CD4-positive, alpha-beta memory T cell (primary cell): ENCODE measurements at regions of chr17 and their contacts with region 1.

Region 1: GRCh38 chr17:46212634-46213435 is 19.6 kb upstream of the KANSL1 start:
- DNase-seq: peak; percentile 73 to 80 (median 76)
- H3K4me3 ChIP-seq: no peak overlapping the region
- H3K4me3 Mint-ChIP-seq: peak overlapping the region in 2 of 8 donors; percentile 1 to 15
- H3K27ac ChIP-seq: no peak overlapping the region
- H3K27ac Mint-ChIP-seq: peak overlapping the region; percentile 9 to 92 (median 54)
- H3K4me1 ChIP-seq: peaks cover 5% of the 10 kb centered on the region
- H3K4me1 Mint-ChIP-seq: peaks cover 19 to 43% (median 26%) of the 10 kb centered on the region in 4 donors
- H3K27me3 ChIP-seq: no peaks in the 10 kb centered on the region
- H3K27me3 Mint-ChIP-seq: no peaks in the 10 kb centered on the region

Region 2: GRCh38 chr17:46020023-46020761 is 192.6 kb before region 1 on chr17:
- CTCF ChIA-PET with region 1: interaction called, 10 read pairs
- POLR2A ChIA-PET with region 1: no interaction called
- intact Hi-C with region 1: no loop called
- DNase-seq: peak; percentile 67 to 78 (median 73)
- H3K4me3 ChIP-seq: no peak overlapping the region
- H3K4me3 Mint-ChIP-seq: peak overlapping the region; percentile 22 to 69 (median 47)
- H3K27ac ChIP-seq: peak overlapping the region; percentile 42
- H3K27ac Mint-ChIP-seq: peak overlapping the region; percentile 85 to 96 (median 93)
- H3K4me1 ChIP-seq: peaks cover 40% of the 10 kb centered on the region
- H3K4me1 Mint-ChIP-seq: peaks cover 12 to 35% (median 28%) of the 10 kb centered on the region in 4 donors
- H3K27me3 ChIP-seq: no peaks in the 10 kb centered on the region
- H3K27me3 Mint-ChIP-seq: no peaks in the 10 kb centered on the region

Region 3: GRCh38 chr17:46061435-46061834 is 151.4 kb before region 1 on chr17:
- CTCF ChIA-PET with region 1: interaction called, 7 read pairs
- POLR2A ChIA-PET with region 1: no interaction called
- intact Hi-C with region 1: loop called (anchors 5 kb)
- DNase-seq: no peak
- H3K4me3 ChIP-seq: no peak overlapping the region
- H3K4me3 Mint-ChIP-seq: no peak overlapping the region
- H3K27ac ChIP-seq: no peak overlapping the region
- H3K27ac Mint-ChIP-seq: peak overlapping the region in 3 of 7 donors; percentile 8 to 46 (median 42)
- H3K4me1 ChIP-seq: peaks cover 7% of the 10 kb centered on the region
- H3K4me1 Mint-ChIP-seq: peaks cover 18 to 30% (median 20%) of the 10 kb centered on the region in 4 donors
- H3K27me3 ChIP-seq: no peaks in the 10 kb centered on the region
- H3K27me3 Mint-ChIP-seq: no peaks in the 10 kb centered on the region

Region 4: GRCh38 chr17:46167826-46168569 is 44.8 kb before region 1 on chr17:
- CTCF ChIA-PET with region 1: interaction called, 10 read pairs
- POLR2A ChIA-PET with region 1: no interaction called
- intact Hi-C with region 1: no loop called
- DNase-seq: no peak
- H3K4me3 ChIP-seq: no peak overlapping the region
- H3K4me3 Mint-ChIP-seq: peak overlapping the region in 5 of 8 donors; percentile 1 to 61 (median 26)
- H3K27ac ChIP-seq: no peak overlapping the region
- H3K27ac Mint-ChIP-seq: peak overlapping the region in 2 of 7 donors; percentile 2 to 10
- H3K4me1 ChIP-seq: peaks cover 95% of the 10 kb centered on the region
- H3K4me1 Mint-ChIP-seq: peaks cover 65 to 94% (median 80%) of the 10 kb centered on the region in 4 donors
- H3K27me3 ChIP-seq: no peaks in the 10 kb centered on the region
- H3K27me3 Mint-ChIP-seq: no peaks in the 10 kb centered on the region

Region 5: GRCh38 chr17:46184696-46185095 is 28.1 kb before region 1 on chr17:
- CTCF ChIA-PET with region 1: interaction called, 41 read pairs
- POLR2A ChIA-PET with region 1: interaction called, 3 read pairs
- intact Hi-C with region 1: no loop called
- DNase-seq: no peak
- H3K4me3 ChIP-seq: no peak overlapping the region
- H3K4me3 Mint-ChIP-seq: peak overlapping the region in 7 of 8 donors; percentile 15 to 83 (median 46)
- H3K27ac ChIP-seq: no peak overlapping the region
- H3K27ac Mint-ChIP-seq: peak overlapping the region in 6 of 7 donors; percentile 5 to 81 (median 33)
- H3K4me1 ChIP-seq: peaks cover 95% of the 10 kb centered on the region
- H3K4me1 Mint-ChIP-seq: peaks cover 62 to 100% (median 86%) of the 10 kb centered on the region in 4 donors
- H3K27me3 ChIP-seq: no peaks in the 10 kb centered on the region
- H3K27me3 Mint-ChIP-seq: no peaks in the 10 kb centered on the region

Region 6: DNA sequence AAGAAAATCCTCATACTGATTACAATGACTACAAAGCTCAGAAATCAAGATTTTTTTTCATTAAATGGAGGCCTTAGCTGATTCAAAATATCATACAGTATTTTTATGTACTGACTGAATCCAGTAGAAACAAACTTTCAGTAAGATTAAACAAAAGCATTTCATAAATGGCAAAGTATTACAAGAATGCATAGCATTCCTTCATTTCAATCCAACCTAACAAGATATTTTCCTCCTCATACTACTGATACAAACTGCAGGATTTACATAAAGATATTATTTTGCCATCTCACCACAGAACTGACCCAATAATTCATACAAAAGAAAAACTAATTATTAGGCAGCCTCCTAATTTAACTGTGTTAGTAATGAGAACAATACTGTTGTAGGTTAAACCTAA is 13.5 kb before region 1 on chr17:
- CTCF ChIA-PET with region 1: interaction called, 93 read pairs
- POLR2A ChIA-PET with region 1: interaction called, 76 read pairs
- intact Hi-C with region 1: loop called (anchors 1 kb)
- DNase-seq: no peak
- H3K4me3 ChIP-seq: no peak overlapping the region
- H3K4me3 Mint-ChIP-seq: no peak overlapping the region
- H3K27ac ChIP-seq: no peak overlapping the region
- H3K27ac Mint-ChIP-seq: peak overlapping the region in 5 of 7 donors; percentile 9 to 88 (median 38)
- H3K4me1 ChIP-seq: peaks cover 37% of the 10 kb centered on the region
- H3K4me1 Mint-ChIP-seq: peaks cover 25 to 70% (median 54%) of the 10 kb centered on the region in 4 donors
- H3K27me3 ChIP-seq: no peaks in the 10 kb centered on the region
- H3K27me3 Mint-ChIP-seq: no peaks in the 10 kb centered on the region